ENCODE measurements at regions of chr4 and their contacts with region 1.

Region 1: GRCh38 chr4:165493359-165493758 is 114.6 kb downstream of the CPE start:
- DNase-seq: peak; percentile 76
- ATAC-seq: peak; percentile 93
- H3K4me3 ChIP-seq: no peak overlapping the region
- H3K27ac ChIP-seq: no peak overlapping the region
- H3K4me1 ChIP-seq: 0 out of 2 replicates have a peak, but pooled peaks cover 4% of the 10 kb centered on the region
- H3K27me3 ChIP-seq: no peaks in the 10 kb centered on the region
- CTCF ChIP-seq: peak; percentile 86

Region 2: GRCh38 chr4:165784672-165785071 is 291.3 kb after region 1 on chr4:
- CTCF ChIA-PET with region 1: no interaction called
- POLR2A ChIA-PET with region 1: no interaction called
- intact Hi-C with region 1: loop called (anchors 5 kb)
- DNase-seq: peak; percentile 6
- ATAC-seq: no peak
- H3K4me3 ChIP-seq: no peak overlapping the region
- H3K27ac ChIP-seq: no peak overlapping the region
- H3K4me1 ChIP-seq: no peaks in the 10 kb centered on the region
- H3K27me3 ChIP-seq: no peaks in the 10 kb centered on the region
- CTCF ChIP-seq: no peak

Region 3: DNA sequence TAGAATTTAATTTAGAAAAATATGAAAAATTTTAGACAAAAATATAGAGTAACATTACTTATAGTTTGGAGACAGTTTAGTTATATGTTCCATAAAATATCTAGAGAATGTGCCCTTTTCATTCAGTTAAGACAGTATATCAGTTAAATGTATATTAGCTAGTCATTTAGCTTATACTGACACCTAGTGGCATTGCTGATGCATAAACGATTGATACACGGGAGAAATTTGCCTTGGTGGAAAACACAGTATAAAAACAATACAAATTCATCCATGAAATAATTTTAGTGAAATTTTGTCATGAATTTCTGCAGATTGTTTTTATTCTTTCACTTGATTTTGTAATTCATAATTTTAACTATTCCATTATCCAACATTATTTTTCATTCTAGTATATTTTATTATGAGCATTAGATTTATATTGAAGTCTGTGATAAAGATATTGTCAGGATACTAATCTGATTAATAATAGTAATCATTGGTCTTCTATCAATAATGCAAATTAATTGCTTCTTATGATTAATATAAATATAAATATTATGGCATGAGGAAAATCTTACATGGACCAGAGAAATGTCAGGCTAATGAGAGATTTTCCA is 598.7 kb after region 1 on chr4:
- CTCF ChIA-PET with region 1: interaction called, 6 read pairs
- POLR2A ChIA-PET with region 1: no interaction called
- intact Hi-C with region 1: loop called (anchors 5 kb)
- DNase-seq: peak; percentile 64
- ATAC-seq: peak; percentile 33; the same call in 1 of the 2 replicates
- H3K4me3 ChIP-seq: no peak overlapping the region
- H3K27ac ChIP-seq: no peak overlapping the region
- H3K4me1 ChIP-seq: peaks cover 4% of the 10 kb centered on the region
- H3K27me3 ChIP-seq: no peaks in the 10 kb centered on the region
- CTCF ChIP-seq: peak; percentile 71

Region 4: GRCh38 chr4:166594326-166594946 is 1101.1 kb after region 1 on chr4:
- CTCF ChIA-PET with region 1: no interaction called
- POLR2A ChIA-PET with region 1: no interaction called
- intact Hi-C with region 1: loop called (anchors 5 kb)
- DNase-seq: peak; percentile 78
- ATAC-seq: peak; percentile 95
- H3K4me3 ChIP-seq: no peak overlapping the region
- H3K27ac ChIP-seq: no peak overlapping the region
- H3K4me1 ChIP-seq: no peaks in the 10 kb centered on the region
- H3K27me3 ChIP-seq: no peaks in the 10 kb centered on the region
- CTCF ChIP-seq: peak; percentile 82